ENCODE measurements at regions of chr4 and their contacts with region 1.

Region 1: GRCh38 chr4:184474263-184475095 is at the start of gene IRF2:
- DNase-seq: peak; percentile 99
- H3K4me3 Mint-ChIP-seq: peak within 1 kb of the TSS; percentile 98
- H3K27ac Mint-ChIP-seq: peak within 1 kb of the TSS; percentile 100
- H3K4me1 Mint-ChIP-seq: peaks cover 49% of the 10 kb centered on the region
- H3K27me3 Mint-ChIP-seq: no peaks in the 10 kb centered on the region
- total RNA-seq, gene IRF2: 37.3 to 38.3 TPM

Region 2: GRCh38 chr4:184237612-184238011 is 236.9 kb before region 1 on chr4:
- CTCF ChIA-PET with region 1: no interaction called
- intact Hi-C with region 1: loop called (anchors 1 kb)
- DNase-seq: peak; percentile 84
- H3K4me3 Mint-ChIP-seq: peak overlapping the region; percentile 32
- H3K27ac Mint-ChIP-seq: peak overlapping the region; percentile 93
- H3K4me1 Mint-ChIP-seq: peaks cover 40% of the 10 kb centered on the region
- H3K27me3 Mint-ChIP-seq: no peaks in the 10 kb centered on the region

Region 3: GRCh38 chr4:184318852-184319251 is 155.6 kb before region 1 on chr4:
- CTCF ChIA-PET with region 1: no interaction called
- intact Hi-C with region 1: loop called (anchors 2 kb)
- DNase-seq: no peak
- H3K4me3 Mint-ChIP-seq: no peak overlapping the region
- H3K27ac Mint-ChIP-seq: no peak overlapping the region
- H3K4me1 Mint-ChIP-seq: peaks cover 36% of the 10 kb centered on the region
- H3K27me3 Mint-ChIP-seq: peaks cover 2% of the 10 kb centered on the region

Region 4: DNA sequence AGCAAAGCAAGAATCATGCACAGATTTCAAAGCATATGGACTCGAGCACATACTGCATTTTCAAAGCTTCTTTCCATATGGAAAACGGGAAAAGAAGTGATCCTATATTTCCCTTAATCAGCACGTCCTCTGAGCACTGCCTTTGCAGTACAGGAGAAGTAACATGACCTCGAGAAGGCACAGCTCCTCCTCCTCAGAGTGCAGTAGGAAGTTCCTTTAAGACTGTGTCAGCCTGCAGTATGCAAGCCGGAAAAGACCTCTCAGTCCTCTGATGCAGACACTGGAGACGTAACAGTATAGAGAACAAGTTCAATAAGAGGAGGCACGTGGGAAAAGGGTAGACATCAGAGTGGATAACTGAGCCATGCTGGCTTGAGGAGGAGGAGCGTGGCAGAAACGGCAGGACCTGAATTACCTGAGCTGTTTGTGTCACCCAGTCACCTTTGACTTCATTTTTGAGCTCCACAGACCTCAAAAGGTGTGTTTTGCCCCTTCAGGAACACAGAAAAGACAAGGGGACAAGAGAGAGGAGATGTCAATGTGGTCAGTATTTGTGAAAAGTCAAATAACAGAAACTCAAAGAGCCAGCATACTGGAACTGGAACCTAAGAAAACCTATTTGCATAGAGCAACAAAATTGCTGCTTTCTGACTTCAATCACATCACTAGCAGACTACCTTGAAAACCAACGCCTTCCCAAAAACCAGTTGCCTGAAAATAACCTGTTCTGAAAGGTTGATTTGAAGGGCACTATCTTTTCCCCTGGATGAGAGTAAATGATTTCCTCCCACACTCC is 20.9 kb before region 1 on chr4:
- CTCF ChIA-PET with region 1: no interaction called
- intact Hi-C with region 1: loop called (anchors 1 kb)
- DNase-seq: peak; percentile 69
- H3K4me3 Mint-ChIP-seq: peak overlapping the region; percentile 65
- H3K27ac Mint-ChIP-seq: peak overlapping the region; percentile 86
- H3K4me1 Mint-ChIP-seq: peaks cover 69% of the 10 kb centered on the region
- H3K27me3 Mint-ChIP-seq: no peaks in the 10 kb centered on the region

Region 5: GRCh38 chr4:184538023-184538599 is 63.6 kb after region 1 on chr4:
- CTCF ChIA-PET with region 1: interaction called, 3 read pairs
- intact Hi-C with region 1: loop called (anchors 1 kb)
- DNase-seq: peak; percentile 79
- H3K4me3 Mint-ChIP-seq: peak overlapping the region; percentile 97
- H3K27ac Mint-ChIP-seq: peak overlapping the region; percentile 96
- H3K4me1 Mint-ChIP-seq: peaks cover 35% of the 10 kb centered on the region
- H3K27me3 Mint-ChIP-seq: no peaks in the 10 kb centered on the region

Region 6: GRCh38 chr4:184825896-184826690 is 351.6 kb after region 1 on chr4 and contains the start of gene ACSL1:
- CTCF ChIA-PET with region 1: no interaction called
- intact Hi-C with region 1: loop called (anchors 5 kb)
- DNase-seq: peak; percentile 76
- H3K4me3 Mint-ChIP-seq: peak within 1 kb of the TSS; percentile 84
- H3K27ac Mint-ChIP-seq: peak within 1 kb of the TSS; percentile 57
- H3K4me1 Mint-ChIP-seq: peaks cover 31% of the 10 kb centered on the region
- H3K27me3 Mint-ChIP-seq: no peaks in the 10 kb centered on the region
- total RNA-seq, gene ACSL1: 29.8 to 31.9 TPM

Region 7: GRCh38 chr4:184968784-184969201 is 494.3 kb after region 1 on chr4:
- CTCF ChIA-PET with region 1: no interaction called
- intact Hi-C with region 1: no loop called
- DNase-seq: no peak
- H3K4me3 Mint-ChIP-seq: no peak overlapping the region
- H3K27ac Mint-ChIP-seq: no peak overlapping the region
- H3K4me1 Mint-ChIP-seq: peaks cover 6% of the 10 kb centered on the region
- H3K27me3 Mint-ChIP-seq: no peaks in the 10 kb centered on the region

Region 8: GRCh38 chr4:186058253-186058979 is 1583.9 kb after region 1 on chr4:
- CTCF ChIA-PET with region 1: no interaction called
- intact Hi-C with region 1: no loop called
- DNase-seq: no peak
- H3K4me3 Mint-ChIP-seq: no peak overlapping the region
- H3K27ac Mint-ChIP-seq: no peak overlapping the region
- H3K4me1 Mint-ChIP-seq: peaks cover 2% of the 10 kb centered on the region
- H3K27me3 Mint-ChIP-seq: peaks cover 5% of the 10 kb centered on the region